ENCODE measurements at regions of chr7 and their contacts with region 1.

Region 1: DNA sequence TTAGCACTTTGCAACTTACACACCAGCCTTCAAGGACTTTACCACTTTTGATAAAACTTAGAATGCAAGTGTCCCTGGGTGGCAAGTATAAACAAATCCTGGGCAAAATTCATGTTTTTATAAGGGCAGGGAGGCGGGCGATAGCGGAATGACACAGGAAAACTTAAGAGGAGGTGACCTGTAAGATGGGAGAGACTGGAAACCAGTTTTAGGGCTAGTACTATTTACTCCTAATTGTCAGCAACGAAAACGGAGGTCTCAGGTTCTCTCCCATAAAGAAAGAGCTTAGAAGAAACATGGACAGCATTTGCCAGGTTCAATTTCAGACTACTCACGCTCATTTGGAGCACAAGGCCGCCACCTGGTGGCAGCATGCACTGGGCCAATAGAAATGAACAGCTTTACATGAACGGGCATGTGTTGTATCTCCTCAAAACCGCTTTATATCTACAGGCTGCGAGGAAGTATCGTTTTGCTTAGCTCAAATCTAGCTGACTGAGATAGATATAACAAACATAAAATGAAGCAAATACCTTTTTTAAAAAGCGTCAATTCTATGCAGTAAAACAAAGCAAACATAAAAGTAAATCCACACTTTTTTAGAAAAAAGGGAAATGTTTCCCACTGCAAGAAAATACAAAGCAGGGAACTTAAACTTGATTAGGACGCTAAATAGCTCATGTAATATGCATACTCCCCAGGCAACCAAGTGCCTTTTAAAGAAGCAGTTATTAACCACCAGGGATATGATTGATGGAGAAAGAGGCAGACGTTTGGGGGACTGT is 37.6 kb upstream of the SVOPL start:
- DNase-seq: peak; percentile 85
- H3K4me3 ChIP-seq: no peak overlapping the region
- H3K27ac ChIP-seq: no peak overlapping the region
- H3K4me1 ChIP-seq: no peaks in the 10 kb centered on the region
- H3K27me3 ChIP-seq: no peaks in the 10 kb centered on the region
- CTCF ChIP-seq: peak; percentile 81 to 87 (median 83)
- EP300 ChIP-seq: no peak
- POLR2A ChIP-seq: no peak

Region 2: GRCh38 chr7:138161600-138162081 is 577.1 kb before region 1 on chr7:
- in situ Hi-C with region 1: loop called (anchors 10 kb)
- intact Hi-C with region 1: no loop called
- DNase-seq: peak; percentile 82
- H3K4me3 ChIP-seq: no peak overlapping the region
- H3K27ac ChIP-seq: no peak overlapping the region
- H3K4me1 ChIP-seq: no peaks in the 10 kb centered on the region
- H3K27me3 ChIP-seq: no peaks in the 10 kb centered on the region
- CTCF ChIP-seq: peak; percentile 35 to 80 (median 54)
- EP300 ChIP-seq: no peak
- POLR2A ChIP-seq: no peak